Common myeloid progenitor, CD34-positive (primary cell): ENCODE measurements at regions of chr2 and their contacts with region 1.

Region 1: DNA sequence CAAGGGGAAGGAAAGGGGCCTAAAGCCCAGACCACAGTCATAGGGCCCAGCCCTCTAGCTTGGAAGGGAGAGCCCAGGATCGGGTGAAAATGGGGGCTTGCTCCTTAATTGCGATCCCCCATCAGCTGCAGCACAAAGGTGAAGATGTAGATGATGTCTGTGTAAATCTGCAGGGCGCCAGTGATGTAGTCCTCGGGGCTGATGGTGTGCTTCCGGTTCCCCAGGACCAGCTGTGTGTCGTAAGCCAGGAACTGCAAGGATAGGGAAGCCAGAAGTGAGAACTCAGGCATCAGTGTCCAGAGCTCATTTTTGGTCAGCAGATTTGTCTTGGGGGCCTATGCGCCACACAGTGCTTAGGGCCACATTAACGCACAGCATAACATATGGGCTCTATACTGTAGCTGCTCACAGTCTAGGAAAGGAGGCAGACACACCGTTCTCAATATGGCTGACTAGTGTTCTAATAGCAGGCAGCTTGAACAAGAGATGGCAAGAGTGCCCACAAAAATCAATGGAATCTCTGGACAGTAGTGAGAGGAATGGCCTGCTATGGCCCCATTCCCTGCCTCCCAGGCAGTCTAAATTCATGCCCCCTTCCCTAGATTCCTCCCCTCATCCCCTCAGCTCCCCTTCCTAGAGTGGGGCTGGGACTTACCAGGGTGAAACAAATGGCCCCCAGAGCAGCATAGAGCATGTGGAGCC is 5.2 kb downstream of the PNKD start:
- DNase-seq: no peak
- H3K4me3 ChIP-seq: no peak overlapping the region
- H3K27ac ChIP-seq: peak overlapping the region in 1 of 2 experiments; percentile 51
- H3K4me1 ChIP-seq: peaks cover 5 to 24% (median 18%) of the 10 kb centered on the region in 4 experiments
- H3K27me3 ChIP-seq: no peaks in the 10 kb centered on the region

Region 2: DNA sequence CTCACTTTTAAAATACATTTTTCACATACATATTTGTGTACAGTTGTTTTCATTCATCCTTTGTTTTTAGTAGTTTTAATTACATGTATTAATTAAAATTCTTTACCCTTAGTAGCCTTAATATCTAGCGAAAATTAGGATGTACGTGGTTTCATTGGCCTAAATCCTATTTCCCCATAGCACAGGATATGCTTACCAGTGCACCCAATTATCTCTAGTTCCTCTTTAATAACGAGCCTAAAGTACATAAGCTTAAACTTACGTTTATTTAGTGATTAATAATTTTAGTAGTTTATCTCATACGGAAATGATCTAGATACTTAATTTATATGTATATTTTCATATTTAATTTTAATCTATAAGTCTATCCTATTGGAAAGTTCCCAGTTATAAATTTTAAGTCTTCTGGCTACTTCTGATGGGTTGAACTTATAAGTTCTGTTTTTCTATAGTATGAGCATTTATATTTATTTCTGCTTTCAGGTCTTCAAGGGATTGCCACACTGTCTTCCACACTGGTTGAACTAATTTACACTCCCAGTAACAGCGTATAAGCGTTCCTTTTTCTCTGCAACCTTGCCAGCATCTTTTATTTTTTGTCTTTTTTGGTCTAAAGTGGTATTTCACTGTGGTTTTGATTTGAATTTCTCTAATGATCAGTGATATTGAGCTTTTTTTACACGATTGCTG is 227.8 kb before region 1 on chr2:
- CTCF ChIA-PET with region 1: no interaction called
- POLR2A ChIA-PET with region 1: no interaction called
- DNase-seq: peak in 2 of 3 donors; percentile 36 to 49
- H3K4me3 ChIP-seq: no peak overlapping the region
- H3K27ac ChIP-seq: no peak overlapping the region
- H3K4me1 ChIP-seq: peaks cover 0 to 3% (median 0%) of the 10 kb centered on the region in 4 experiments
- H3K27me3 ChIP-seq: peaks cover 0 to 2% (median 0%) of the 10 kb centered on the region in 5 experiments

Region 3: GRCh38 chr2:218286570-218287459 is 11.3 kb after region 1 on chr2:
- CTCF ChIA-PET with region 1: interaction called, 383 read pairs
- POLR2A ChIA-PET with region 1: interaction called, 20 read pairs
- DNase-seq: peak; percentile 88 to 94 (median 92)
- H3K4me3 ChIP-seq: peak overlapping the region in 6 of 7 experiments; percentile 2 to 68 (median 53)
- H3K27ac ChIP-seq: peak overlapping the region; percentile 89 to 91
- H3K4me1 ChIP-seq: peaks cover 26 to 77% (median 71%) of the 10 kb centered on the region in 4 experiments
- H3K27me3 ChIP-seq: no peaks in the 10 kb centered on the region

Region 4: DNA sequence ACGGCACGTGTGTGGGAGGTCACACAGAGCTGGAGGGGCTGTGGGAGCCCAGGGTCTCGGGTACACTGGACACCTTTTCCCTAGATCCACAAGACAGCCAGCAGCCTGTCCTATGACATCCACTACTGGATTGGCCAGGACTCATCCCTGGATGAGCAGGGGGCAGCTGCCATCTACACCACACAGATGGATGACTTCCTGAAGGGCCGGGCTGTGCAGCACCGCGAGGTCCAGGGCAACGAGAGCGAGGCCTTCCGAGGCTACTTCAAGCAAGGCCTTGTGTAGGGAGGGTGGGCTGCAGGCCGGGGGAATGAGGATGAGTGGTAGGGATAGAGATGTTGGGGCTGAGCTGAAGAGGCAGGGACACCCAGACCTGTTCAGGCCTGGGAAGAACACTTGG is 150.0 kb after region 1 on chr2:
- CTCF ChIA-PET with region 1: no interaction called
- POLR2A ChIA-PET with region 1: no interaction called
- DNase-seq: no peak
- H3K4me3 ChIP-seq: no peak overlapping the region
- H3K27ac ChIP-seq: no peak overlapping the region
- H3K4me1 ChIP-seq: peaks cover 0 to 4% (median 0%) of the 10 kb centered on the region in 4 experiments
- H3K27me3 ChIP-seq: no peaks in the 10 kb centered on the region